AG04449 (cell line): ENCODE measurements at regions of chr3 and their contacts with region 1.

Region 1: GRCh38 chr3:155995525-155996351 is 124.6 kb upstream of the KCNAB1 start:
- DNase-seq: peak; percentile 28
- H3K4me3 ChIP-seq: no peak overlapping the region
- CTCF ChIP-seq: peak; percentile 34

Region 2: DNA sequence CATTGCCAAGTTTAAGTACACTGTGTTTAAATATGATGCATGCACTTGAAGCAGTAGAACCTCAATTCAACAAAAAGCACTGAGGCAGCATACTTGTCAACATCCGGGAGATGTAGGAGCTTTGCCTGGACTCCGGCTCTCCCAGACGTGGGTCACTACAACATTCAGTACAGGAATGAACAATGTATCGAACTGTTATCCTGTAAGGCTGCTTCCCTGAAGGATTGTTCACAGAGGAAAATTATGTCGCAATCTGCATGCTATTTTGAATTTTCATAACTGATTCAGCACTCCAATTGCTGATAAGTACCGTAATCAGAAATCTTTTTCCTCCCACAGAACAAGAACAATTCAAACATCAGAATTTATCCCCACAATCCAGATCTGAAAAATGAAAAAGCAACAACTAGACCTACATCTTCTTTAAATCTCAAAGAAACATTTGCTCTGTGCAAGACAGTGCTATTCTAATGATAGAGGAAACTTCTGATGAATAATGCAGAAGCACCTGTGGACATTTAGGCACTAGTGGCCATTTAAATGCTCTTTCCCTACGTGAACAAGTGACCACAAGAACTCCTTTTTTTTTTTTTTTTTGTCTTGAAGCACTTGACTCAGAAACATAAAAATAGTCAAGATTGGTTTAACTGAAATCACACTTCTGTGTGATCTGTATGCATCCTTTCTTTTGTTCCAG is 364.3 kb before region 1 on chr3:
- CTCF ChIA-PET with region 1: no interaction called
- POLR2A ChIA-PET with region 1: no interaction called
- DNase-seq: no peak
- H3K4me3 ChIP-seq: no peak overlapping the region
- CTCF ChIP-seq: no peak

Region 3: DNA sequence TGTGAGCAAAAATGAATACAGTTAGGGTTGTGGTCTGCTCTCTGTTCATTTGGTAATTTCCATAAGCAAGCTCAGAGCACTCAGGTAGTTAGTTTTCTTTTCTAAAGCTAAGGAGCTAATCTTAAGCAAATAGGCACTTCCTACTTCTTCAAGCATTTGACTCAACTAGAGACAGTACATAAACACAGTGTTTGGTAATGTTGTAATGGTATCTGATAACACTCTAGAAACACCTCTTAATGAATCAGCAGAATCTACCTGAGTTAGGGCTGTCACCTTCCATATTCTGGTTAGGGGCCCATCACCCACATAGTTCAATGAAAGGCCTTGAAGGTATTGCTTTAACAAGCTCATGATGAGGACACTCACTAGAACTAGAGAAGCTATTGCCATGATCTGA is 334.0 kb before region 1 on chr3:
- CTCF ChIA-PET with region 1: no interaction called
- POLR2A ChIA-PET with region 1: no interaction called
- DNase-seq: no peak
- H3K4me3 ChIP-seq: no peak overlapping the region
- CTCF ChIP-seq: no peak

Region 4: DNA sequence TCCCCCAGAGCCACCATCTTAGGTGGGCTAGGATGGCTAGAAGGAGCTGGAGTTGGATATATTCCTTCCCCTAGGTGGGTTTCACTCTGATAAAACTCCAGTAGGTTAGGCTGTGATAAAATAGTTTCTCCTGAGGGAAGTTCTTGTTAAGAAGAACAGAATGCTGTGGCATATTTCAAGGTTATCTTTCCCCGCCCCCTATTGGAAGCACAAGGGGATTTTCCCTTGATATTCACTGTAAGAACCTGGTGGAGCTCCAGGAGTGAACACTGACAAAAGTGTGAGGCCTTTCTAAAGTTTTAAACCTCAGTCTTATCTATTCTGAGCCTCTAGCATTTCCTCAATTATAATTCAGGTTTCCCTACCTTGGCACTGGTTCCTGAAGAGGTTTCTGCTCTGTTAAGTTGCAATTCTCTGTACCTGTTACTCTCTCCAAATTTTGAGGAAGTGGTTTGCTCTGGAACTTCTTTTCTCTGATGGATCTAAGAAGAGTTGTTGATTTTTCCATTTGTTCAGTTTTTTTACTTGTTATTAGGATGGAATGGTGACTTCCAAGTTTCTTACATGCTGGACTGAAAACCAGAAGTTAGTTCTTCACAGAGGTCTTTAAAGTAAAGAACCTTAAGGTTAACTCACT is 11.8 kb before region 1 on chr3:
- CTCF ChIA-PET with region 1: interaction called, 11 read pairs
- POLR2A ChIA-PET with region 1: no interaction called
- DNase-seq: no peak
- H3K4me3 ChIP-seq: no peak overlapping the region
- CTCF ChIP-seq: no peak

Region 5: DNA sequence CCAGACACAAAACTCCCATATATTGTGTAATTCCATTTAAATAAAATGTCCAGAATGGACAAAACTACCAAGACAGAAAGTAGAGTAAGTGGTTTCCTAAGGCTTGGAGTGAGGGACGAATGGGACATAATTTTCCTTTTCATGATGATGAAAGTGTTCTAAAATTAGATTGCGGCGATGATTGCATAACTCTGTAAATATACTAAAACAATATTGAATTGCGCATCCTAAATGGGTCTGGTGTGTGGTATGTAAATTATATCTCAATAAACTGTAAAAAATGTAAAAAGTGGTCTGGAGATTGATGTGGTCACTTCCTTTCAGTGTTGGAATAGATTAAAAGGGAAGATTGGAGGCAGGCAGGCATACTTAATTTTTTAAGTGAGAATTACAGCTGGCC is 18.8 kb after region 1 on chr3:
- CTCF ChIA-PET with region 1: interaction called, 12 read pairs
- POLR2A ChIA-PET with region 1: no interaction called
- DNase-seq: no peak
- H3K4me3 ChIP-seq: no peak overlapping the region
- CTCF ChIP-seq: no peak